Heart left ventricle (tissue), 16 donors: ENCODE measurements at regions of chr1 and their contacts with region 1.

Region 1: GRCh38 chr1:48572646-48573261 is 100.8 kb upstream of the SPATA6 start:
- DNase-seq: peak in 4 of 5 donors; percentile 20 to 50 (median 30)
- ATAC-seq: peak; percentile 73 to 80 (median 76)
- H3K4me3 ChIP-seq: no peak overlapping the region
- H3K27ac ChIP-seq: no peak overlapping the region
- H3K4me1 ChIP-seq: peaks cover 0 to 3% (median 0%) of the 10 kb centered on the region in 12 donors
- H3K27me3 ChIP-seq: peaks cover 0 to 3% (median 0%) of the 10 kb centered on the region in 9 donors
- CTCF ChIP-seq: peak in 11 of 12 donors; percentile 26 to 68 (median 56)
- POLR2A ChIP-seq: no peak

Region 2: GRCh38 chr1:48697066-48697707 is 124.4 kb after region 1 on chr1:
- intact Hi-C with region 1: loop called in 9 of 10 experiments (anchors 2 to 10 kb)
- DNase-seq: peak in 4 of 5 donors; percentile 29 to 68 (median 31)
- ATAC-seq: peak in 1 of 4 donors; percentile 35
- H3K4me3 ChIP-seq: no peak overlapping the region
- H3K27ac ChIP-seq: no peak overlapping the region
- H3K4me1 ChIP-seq: no peaks in the 10 kb centered on the region
- H3K27me3 ChIP-seq: peaks cover 0 to 42% (median under 1%) of the 10 kb centered on the region in 9 donors
- CTCF ChIP-seq: peak; percentile 77 to 91 (median 89)
- POLR2A ChIP-seq: no peak

Region 3: DNA sequence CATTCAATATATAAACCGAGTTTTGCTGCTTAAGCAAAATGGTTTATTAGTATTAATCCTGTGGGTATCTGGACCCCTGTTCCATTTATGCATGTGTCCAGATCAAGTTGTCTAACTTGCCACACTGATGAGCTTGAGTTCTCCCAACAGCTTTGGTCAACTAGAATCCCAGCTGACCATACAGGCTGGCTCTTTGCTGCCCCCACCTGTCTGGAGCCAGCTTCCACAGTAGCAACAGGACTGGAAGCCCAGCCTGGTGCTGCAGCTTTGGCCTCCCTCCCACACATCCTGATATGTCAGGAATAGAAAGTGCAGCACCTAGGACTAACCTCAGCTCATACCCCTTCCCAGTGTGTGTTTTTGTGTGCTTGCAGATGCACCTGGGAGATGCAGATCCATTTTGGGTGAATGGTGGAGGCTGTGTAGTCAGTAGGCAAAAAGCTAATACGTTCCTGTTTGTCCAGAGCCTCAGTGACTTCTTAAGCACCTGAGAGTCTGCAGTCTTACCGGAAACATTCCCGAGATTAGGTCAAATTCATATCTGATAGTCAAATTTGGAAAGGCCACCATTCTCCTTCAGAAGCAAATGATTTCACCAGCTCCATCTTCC is 244.9 kb after region 1 on chr1:
- intact Hi-C with region 1: loop called in 7 of 10 experiments (anchors 2 to 10 kb)
- DNase-seq: peak; percentile 32 to 66 (median 54)
- ATAC-seq: peak in 3 of 4 donors; percentile 79 to 82 (median 80)
- H3K4me3 ChIP-seq: no peak overlapping the region
- H3K27ac ChIP-seq: no peak overlapping the region
- H3K4me1 ChIP-seq: no peaks in the 10 kb centered on the region
- H3K27me3 ChIP-seq: no peaks in the 10 kb centered on the region
- CTCF ChIP-seq: peak; percentile 45 to 75 (median 68)
- POLR2A ChIP-seq: no peak

Region 4: DNA sequence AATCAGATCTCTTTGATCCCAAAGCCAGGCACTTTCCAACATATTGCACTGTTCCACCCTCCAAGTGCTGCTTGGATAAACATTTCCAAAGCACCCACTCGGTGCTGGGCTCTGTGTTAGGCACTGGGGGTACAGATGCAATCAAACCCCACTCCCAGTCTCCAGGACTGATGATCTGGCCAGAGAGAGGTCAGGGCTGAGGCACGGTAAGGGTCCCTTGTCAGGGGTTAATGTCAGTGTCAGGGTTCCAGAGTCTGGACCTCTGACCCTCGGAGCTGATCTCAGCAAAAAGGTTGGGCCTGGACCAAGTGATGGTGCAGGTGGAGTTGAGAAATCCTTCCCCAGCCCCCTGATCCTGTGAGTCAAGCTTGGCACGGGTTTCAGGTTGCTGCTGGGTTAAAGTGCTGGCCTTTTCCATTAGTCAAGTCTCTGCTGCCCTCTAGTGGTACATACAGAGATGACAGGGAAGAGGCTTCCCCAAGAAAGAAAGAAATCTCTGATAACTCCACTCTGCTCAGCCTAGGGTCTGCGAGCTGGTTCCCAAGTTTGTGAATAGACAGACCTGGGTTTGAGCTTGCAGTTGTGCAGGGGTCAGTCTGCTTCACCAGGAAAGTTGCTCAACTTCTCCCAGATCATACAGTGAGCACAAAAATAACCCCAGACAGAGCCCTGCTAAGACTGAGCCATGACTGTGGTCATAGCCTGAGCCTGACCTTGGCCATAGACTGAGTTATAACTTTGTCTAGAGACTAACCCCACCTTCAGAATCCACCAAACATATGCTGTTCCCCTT is 1775.9 kb after region 1 on chr1:
- intact Hi-C with region 1: loop called in 1 of 10 experiments (anchors 10 kb)
- DNase-seq: peak in 4 of 5 donors; percentile 36 to 38 (median 36)
- ATAC-seq: peak in 3 of 4 donors; percentile 56 to 72 (median 68)
- H3K4me3 ChIP-seq: no peak overlapping the region
- H3K27ac ChIP-seq: no peak overlapping the region
- H3K4me1 ChIP-seq: no peaks in the 10 kb centered on the region
- H3K27me3 ChIP-seq: peaks cover 0 to 39% (median 9%) of the 10 kb centered on the region in 9 donors
- CTCF ChIP-seq: peak; percentile 77 to 91 (median 84)
- POLR2A ChIP-seq: no peak